ENCODE measurements at regions of chr19 and their contacts with region 1.

Region 1: GRCh38 chr19:18203863-18204393 is at the start of gene RAB3A:
- DNase-seq: peak; percentile 100
- ATAC-seq: peak; percentile 96
- total RNA-seq, gene RAB3A: 25.4 TPM

Region 2: DNA sequence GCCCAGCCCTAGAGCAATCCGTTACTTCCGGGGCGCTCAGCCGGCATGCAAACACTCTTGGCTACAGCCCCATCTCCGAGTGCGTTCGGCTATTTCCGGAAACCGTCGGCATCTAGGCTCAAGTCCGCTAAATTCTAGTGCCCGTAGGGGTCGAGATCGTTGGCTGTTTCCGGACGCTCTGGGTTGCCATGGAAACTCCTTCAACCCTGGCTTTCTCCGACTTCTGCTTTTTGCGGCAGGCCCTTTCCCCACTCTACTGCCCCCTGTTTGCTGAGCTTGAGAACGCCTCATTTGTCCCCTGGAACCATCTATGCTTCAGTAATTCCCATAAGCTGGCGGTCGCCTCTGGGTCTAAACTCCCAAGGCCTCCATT is 51.5 kb before region 1 on chr19:
- intact Hi-C with region 1: loop called (anchors 5 kb)
- DNase-seq: peak; percentile 97
- ATAC-seq: peak; percentile 77

Region 3: DNA sequence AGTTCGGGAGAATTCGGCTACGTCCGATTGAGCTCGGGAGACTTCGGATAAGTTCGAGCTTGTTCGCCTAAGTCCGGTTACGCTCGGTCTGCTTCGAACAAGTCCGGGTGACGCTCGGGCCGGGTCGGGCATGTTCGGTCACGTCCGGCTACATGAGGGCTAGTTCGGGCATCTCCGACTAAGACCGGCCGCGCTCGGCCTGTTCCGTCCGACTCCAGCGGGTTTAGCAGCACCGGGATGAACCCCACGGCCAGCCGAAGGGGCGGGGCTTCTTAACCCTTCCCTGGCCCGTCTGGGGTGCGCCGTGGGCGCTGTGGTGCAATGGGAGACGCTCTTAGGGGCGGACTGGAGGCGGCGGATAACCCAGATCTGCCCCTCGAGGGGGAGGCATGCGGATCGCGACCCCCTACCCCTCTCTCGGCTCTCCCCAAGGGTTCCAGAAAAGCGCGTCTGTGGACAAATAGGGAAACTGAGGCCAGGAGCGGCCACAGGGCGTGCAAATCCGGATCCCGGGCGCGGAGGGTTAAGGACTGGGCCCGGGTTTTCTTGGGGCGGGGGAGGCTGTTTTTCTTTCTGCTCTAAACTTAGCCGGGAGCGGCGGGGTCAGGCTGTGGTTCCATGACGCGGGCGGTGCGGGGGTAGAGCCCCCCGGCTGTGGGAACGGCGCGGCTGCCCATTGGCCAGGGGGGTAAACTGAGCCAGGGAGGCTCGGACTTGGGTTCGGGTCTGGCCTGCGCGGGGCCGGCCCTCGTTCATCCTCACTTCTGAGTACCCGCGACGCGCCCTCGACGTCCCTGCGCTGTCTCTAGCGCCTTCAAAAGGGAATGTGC is 20.8 kb after region 1 on chr19:
- intact Hi-C with region 1: loop called (anchors 2 kb)
- DNase-seq: peak; percentile 98
- ATAC-seq: peak; percentile 98

Region 4: GRCh38 chr19:18251587-18252369 is 47.9 kb after region 1 on chr19:
- intact Hi-C with region 1: loop called (anchors 2 kb)
- DNase-seq: peak; percentile 75
- ATAC-seq: peak; percentile 67

Region 5: DNA sequence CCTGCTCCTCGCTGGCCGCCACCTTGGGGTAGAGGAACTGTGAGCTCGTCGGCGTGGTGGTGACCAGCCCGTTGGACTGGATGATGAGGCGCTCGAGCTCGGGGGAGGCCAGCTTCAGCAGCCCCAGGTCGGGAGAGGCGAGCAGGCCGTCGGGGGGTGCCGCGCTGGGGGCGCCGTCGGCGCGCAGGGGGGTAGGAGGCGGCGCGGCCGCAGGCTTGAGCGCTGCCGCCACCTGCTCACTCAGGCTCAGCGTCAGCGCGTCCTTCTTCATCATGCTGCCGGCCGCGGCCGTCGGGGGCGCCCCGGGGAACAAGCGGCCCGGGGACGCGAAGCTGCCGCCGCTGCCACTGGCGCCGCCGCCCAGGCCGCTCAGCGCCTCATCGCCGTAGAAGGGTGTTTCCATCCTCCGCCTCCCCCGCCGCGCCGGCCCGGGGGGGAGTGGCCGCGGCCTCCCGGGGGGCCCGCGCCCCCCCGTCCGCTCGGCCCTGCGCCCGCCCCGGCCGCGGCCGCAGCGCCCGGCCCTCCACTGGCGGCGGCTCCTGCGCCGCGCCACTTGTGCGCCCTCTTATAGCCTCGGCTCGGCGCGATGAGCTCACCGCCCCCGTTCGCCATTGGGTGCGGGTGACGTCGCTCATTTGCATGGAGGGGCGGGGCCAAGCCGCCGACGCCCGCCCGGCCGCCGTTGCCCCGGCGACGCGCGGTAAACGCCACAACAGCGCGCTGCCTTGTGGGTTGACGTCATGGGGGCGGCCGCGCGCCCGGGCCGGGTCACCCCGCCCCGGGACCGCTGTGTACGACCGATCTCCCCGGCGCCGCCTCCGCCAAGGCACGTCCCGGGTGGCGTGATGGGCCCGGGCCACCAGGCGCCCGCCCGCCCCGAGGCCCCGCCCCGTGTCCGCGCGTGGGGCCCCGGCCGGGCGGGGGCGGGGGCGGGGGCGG is 77.4 kb after region 1 on chr19 and contains the start of gene JUND:
- intact Hi-C with region 1: loop called (anchors 2 kb)
- DNase-seq: peak; percentile 100
- ATAC-seq: peak; percentile 83
- total RNA-seq, gene JUND: 113 TPM

Region 6: GRCh38 chr19:18310118-18310909 is 106.4 kb after region 1 on chr19:
- intact Hi-C with region 1: no loop called
- DNase-seq: no peak
- ATAC-seq: no peak

Region 7: DNA sequence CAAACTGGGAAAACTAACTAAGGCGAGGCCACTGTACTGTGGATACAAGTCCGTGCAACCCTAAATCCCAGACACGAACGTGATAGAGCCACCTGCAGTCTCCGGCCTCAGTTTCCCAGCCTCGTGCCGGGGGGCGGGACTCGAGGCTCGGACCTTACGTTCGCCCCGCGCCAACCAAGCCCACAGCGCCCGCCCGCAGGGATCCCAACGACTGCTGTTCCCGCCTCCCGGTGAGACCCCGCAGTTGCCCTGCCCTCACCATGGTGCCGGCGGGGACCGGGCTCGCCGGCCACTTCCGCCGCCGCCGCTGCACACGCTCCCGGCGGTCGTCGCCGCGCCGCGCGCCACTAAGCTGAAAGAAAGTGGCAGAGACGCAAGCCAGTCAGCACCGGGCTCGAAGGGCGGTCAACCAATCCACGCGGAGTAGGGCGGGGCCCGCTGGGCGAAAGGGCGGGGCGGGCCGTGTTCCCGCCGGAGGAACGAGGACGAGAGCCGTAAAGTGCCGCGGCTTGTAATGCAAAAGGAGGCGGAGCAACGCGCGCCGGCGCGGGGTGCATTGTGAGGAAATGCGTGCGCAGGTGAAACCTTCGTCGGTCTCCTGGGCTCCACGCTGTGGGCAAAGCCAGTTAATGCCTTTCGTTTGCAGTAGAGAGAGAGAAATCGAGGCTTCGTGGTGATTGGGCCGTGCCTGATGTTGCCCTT is 119.0 kb after region 1 on chr19 and contains the start of gene LSM4:
- intact Hi-C with region 1: loop called (anchors 2 kb)
- DNase-seq: peak; percentile 99
- ATAC-seq: peak; percentile 98
- total RNA-seq, gene LSM4: 106 TPM

Region 8: DNA sequence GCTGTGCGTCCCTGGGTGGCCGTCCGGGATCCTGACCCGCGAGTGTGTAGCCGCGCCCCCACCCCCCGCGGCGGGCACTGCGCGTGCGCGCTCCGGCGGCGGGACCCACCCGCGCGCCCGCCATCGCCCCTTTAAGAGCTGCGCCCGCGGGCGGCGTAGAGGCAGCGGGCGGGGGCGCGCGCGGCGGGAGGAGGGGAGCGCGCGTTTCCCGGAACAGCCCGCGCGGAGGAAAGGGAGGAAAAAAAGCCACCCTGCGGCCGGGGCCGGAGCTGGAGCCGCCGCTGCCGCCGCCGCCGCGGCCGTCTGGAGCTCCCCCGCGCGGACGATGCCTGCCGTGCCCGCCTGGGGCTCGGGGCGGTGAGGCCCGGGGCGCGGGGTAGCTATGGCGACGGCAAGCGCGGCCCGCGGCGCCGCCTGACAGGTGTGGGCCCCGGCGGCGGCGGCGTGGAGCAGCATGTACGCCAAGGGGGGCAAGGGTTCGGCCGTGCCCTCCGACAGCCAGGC is 215.3 kb after region 1 on chr19 and contains the start of gene SSBP4:
- intact Hi-C with region 1: loop called (anchors 5 kb)
- DNase-seq: peak; percentile 88
- ATAC-seq: peak; percentile 15
- total RNA-seq, gene SSBP4: 36.2 TPM

Measured in Right ventricle myocardium inferior (tissue), 1 donor.